GM12878 (cell line): ENCODE measurements at regions of chr20 and their contacts with region 1.

Region 1: DNA sequence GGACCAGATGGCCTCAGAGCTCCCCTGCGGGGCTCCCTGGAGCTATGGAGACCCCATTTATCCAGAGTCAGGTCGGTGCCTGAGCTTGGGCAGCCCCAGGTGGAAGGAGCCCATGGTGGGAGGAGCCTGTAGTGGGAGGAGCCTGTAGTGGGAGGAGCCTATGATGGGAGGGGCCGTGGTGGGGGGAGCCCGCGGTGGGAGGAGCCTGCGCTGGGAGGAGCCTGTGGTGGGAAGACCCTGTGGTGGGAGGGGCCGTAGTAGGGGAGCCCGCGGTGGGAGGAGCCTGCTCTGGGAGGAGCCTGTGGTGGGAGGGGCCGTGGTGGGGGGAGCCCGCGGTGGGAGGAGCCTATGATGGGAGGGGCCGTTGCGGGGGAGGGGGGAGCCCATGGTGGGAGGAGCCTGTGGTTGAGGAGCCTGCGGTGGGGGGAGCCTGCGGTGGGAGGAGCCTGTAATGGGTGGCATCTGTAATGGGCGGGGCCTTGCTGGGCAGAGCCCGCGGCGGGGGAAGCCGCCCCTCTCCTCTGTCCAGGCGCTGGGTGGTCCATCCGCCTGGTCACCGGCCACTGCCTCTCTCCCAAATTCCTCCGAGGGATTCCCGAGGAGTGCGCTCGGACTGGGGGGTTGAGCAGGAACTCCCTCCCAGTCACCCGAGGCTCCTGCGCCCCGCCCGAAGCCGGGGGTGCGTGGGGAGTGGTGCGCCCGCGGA is 579 bp upstream of the FNDC11 start:
- DNase-seq: peak; percentile 35
- ATAC-seq: peak; percentile 71
- H3K4me3 ChIP-seq: peak overlapping the region; percentile 65; the same call in 1 of the 2 replicates
- H3K27ac ChIP-seq: peak overlapping the region; percentile 64
- H3K4me1 ChIP-seq: peaks cover 22% of the 10 kb centered on the region
- H3K27me3 ChIP-seq: no peaks in the 10 kb centered on the region; a peak in 1 of 4 replicates
- CTCF ChIP-seq: no peak
- EP300 ChIP-seq: no peak
- POLR2A ChIP-seq: no peak
- RAD21 ChIP-seq: no peak

Region 2: GRCh38 chr20:63574156-63574828 is 20.9 kb after region 1 on chr20 and contains the start of gene HELZ2:
- CTCF ChIA-PET with region 1: interaction called, 7 read pairs
- POLR2A ChIA-PET with region 1: interaction called, 6 read pairs
- RAD21 ChIA-PET with region 1: interaction called, 10 read pairs
- SMC1A ChIA-PET with region 1: no interaction called
- in situ Hi-C with region 1: no loop called
- intact Hi-C with region 1: no loop called
- DNase-seq: no peak
- ATAC-seq: peak; percentile 93
- H3K4me3 ChIP-seq: peak within 1 kb of the TSS; percentile 90
- H3K27ac ChIP-seq: no peak within 1 kb of the TSS; the same call in 1 of the 2 replicates
- H3K4me1 ChIP-seq: peaks cover 10% of the 10 kb centered on the region
- H3K27me3 ChIP-seq: no peaks in the 10 kb centered on the region
- CTCF ChIP-seq: no peak
- EP300 ChIP-seq: no peak
- POLR2A ChIP-seq: peak; percentile 65
- RAD21 ChIP-seq: no peak
- polyA plus RNA-seq, gene HELZ2: 0.05 to 0.08 TPM

Region 3: DNA sequence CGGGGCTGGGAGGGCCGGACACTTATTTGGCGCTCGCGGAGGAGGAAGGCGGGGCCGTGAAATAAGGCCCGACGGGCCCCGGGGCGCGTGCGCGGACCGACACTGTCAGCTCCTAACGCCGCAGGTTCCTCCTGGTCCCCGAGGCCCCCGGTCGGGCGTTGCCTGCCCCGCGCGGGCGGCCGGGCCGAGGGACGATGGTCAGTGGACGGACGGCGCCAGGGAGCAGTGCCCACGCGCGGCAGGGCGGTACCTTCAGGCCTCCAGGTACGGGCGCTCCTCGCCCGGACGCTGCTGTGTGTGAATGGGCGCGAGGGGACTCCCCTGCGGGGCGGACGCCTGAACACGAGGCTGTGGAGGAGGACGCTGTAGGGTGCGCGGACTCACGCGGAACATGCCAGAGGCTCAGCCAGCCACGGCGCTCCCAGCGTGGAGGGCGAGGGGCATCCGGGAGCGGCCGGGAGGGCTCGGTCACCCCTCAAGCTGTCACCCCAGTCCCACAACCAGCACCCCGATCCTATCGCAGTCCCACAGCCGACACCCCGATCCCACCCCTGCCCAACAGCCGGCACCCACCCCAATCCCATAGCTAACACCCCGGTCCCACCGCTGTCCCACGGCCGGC is 73.9 kb after region 1 on chr20:
- CTCF ChIA-PET with region 1: interaction called, 3 read pairs
- POLR2A ChIA-PET with region 1: no interaction called
- RAD21 ChIA-PET with region 1: no interaction called
- SMC1A ChIA-PET with region 1: interaction called, 3 read pairs
- in situ Hi-C with region 1: no loop called
- intact Hi-C with region 1: loop called (anchors 1 kb)
- DNase-seq: peak; percentile 57
- ATAC-seq: peak; percentile 84
- H3K4me3 ChIP-seq: peak overlapping the region; percentile 94
- H3K27ac ChIP-seq: peak overlapping the region; percentile 73
- H3K4me1 ChIP-seq: peaks cover 8% of the 10 kb centered on the region
- H3K27me3 ChIP-seq: no peaks in the 10 kb centered on the region
- CTCF ChIP-seq: no peak
- EP300 ChIP-seq: no peak
- POLR2A ChIP-seq: peak; percentile 92
- RAD21 ChIP-seq: no peak